Breast epithelium (tissue), 4 donors: ENCODE measurements at regions of chrX and their contacts with region 1.

Region 1: GRCh38 chrX:138847928-138848327 is 136.4 kb upstream of the FGF13 start:
- DNase-seq: no peak
- H3K4me3 ChIP-seq: no peak overlapping the region
- H3K27ac ChIP-seq: no peak overlapping the region
- H3K4me1 ChIP-seq: no peaks in the 10 kb centered on the region
- H3K27me3 ChIP-seq: peaks cover 0 to 33% of the 10 kb centered on the region in 2 donors
- CTCF ChIP-seq: no peak
- POLR2A ChIP-seq: no peak

Region 2: DNA sequence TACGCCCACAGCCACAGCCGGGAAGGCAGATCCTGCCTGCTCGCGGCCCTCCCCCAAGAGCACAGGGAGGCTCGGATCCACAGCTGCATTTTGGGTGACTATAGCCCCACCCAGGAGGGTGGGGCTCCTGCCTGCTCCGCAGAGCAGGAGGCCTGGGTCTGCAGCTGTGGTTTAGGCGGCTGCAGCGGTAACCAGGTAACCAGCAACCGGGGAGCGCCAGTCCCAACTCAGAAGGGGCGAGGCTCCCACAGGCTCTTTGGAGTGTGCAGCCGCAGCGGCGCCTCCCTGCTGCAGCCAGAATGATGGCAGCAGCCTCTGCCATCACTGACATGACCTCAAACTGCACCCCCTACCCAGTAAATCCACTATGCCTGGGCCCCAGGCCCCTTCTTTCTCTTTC is 534.6 kb after region 1 on chrX:
- intact Hi-C with region 1: loop called (anchors 5 kb)
- DNase-seq: no peak
- H3K4me3 ChIP-seq: no peak overlapping the region
- H3K27ac ChIP-seq: no peak overlapping the region
- H3K4me1 ChIP-seq: no peaks in the 10 kb centered on the region
- H3K27me3 ChIP-seq: peaks cover 0 to 18% of the 10 kb centered on the region in 2 donors
- CTCF ChIP-seq: no peak
- POLR2A ChIP-seq: no peak